Calu3 (cell line): ENCODE measurements at regions of chr16 and their contacts with region 1.

Region 1: GRCh38 chr16:15427648-15428239 is 6.6 kb upstream of the BMERB1 start:
- DNase-seq: peak; percentile 60
- H3K4me3 Mint-ChIP-seq: no peak overlapping the region
- H3K27ac Mint-ChIP-seq: no peak overlapping the region
- H3K4me1 Mint-ChIP-seq: no peaks in the 10 kb centered on the region
- H3K27me3 Mint-ChIP-seq: peaks cover under 1% of the 10 kb centered on the region
- CTCF ChIP-seq: peak; percentile 53

Region 2: GRCh38 chr16:15466886-15467781 is 39.4 kb after region 1 on chr16:
- CTCF ChIA-PET with region 1: interaction called, 11 read pairs
- intact Hi-C with region 1: loop called (anchors 2 kb)
- DNase-seq: no peak
- H3K4me3 Mint-ChIP-seq: no peak overlapping the region
- H3K27ac Mint-ChIP-seq: no peak overlapping the region
- H3K4me1 Mint-ChIP-seq: peaks cover 8% of the 10 kb centered on the region
- H3K27me3 Mint-ChIP-seq: no peaks in the 10 kb centered on the region
- CTCF ChIP-seq: peak; percentile 50

Region 3: DNA sequence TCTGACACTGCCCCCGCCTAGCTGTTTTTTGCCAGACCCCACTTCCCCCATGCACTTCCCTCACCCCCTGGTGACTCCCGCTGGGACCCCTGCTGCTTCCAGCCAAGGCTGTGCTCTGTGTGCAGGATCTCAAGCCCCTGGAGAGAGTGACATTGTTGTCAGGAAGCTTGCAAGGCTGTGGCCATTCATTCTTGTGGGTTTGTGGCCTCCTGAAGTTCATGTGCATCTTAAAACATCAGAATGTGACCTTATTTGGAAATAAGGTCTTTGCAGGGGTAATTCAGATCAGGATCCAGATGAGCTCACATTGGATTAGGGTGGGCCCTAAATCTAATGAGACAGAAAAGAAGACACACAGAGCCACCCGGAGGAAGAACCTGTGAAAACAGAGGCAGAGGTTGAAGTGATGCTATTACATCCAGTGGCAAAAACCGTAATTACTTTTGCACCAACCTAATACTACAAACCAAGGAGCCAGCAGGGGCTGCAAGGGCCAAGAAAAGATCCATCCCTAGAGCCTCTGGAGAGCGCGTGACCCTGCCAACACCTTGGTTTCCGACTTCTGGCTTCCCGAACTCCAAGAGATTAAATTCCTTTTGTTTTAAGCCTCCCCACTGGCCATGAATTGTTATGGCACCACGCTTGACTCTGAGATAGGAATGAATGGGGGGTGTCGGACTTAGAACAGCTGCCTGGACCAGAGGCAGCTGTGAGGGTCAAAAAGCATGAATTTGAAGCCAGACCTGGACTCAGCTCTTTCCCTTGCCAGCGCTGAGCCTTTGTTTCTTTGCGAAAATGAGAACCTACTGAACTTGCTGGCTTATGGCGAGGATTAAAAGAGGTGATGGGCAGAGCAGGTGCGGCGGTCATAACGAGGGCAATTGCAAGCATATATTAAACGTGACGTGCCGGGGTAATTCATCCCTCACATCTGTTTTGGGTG is 82.1 kb after region 1 on chr16:
- CTCF ChIA-PET with region 1: no interaction called
- intact Hi-C with region 1: no loop called
- DNase-seq: no peak
- H3K4me3 Mint-ChIP-seq: no peak overlapping the region
- H3K27ac Mint-ChIP-seq: no peak overlapping the region
- H3K4me1 Mint-ChIP-seq: no peaks in the 10 kb centered on the region
- H3K27me3 Mint-ChIP-seq: peaks cover 38% of the 10 kb centered on the region
- CTCF ChIP-seq: no peak

Region 4: DNA sequence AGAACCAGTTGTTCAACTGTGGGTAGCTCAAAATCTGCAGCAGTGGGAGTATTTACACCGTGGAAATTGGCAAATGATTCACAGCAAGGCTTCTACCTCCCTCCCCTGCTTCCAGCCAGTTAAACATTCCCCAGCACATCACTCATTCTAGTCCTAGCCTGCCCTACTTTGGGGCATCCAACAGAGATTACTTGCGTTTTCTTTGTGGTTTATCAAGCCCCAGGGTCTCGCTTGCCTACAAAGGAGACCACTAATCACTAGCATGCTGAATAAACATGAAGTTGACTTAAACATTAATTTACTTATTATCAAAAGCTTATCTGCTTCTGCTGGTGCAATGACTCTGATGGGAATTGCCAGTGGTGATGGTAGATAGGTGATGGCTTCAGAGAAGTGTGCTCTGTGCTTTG is 120.7 kb after region 1 on chr16:
- CTCF ChIA-PET with region 1: interaction called, 14 read pairs
- intact Hi-C with region 1: no loop called
- DNase-seq: peak; percentile 8
- H3K4me3 Mint-ChIP-seq: no peak overlapping the region
- H3K27ac Mint-ChIP-seq: no peak overlapping the region
- H3K4me1 Mint-ChIP-seq: peaks cover 33% of the 10 kb centered on the region
- H3K27me3 Mint-ChIP-seq: no peaks in the 10 kb centered on the region
- CTCF ChIP-seq: no peak

Region 5: GRCh38 chr16:15704545-15704987 is 276.8 kb after region 1 on chr16:
- CTCF ChIA-PET with region 1: no interaction called
- intact Hi-C with region 1: loop called (anchors 10 kb)
- DNase-seq: peak; percentile 83
- H3K4me3 Mint-ChIP-seq: no peak overlapping the region
- H3K27ac Mint-ChIP-seq: no peak overlapping the region
- H3K4me1 Mint-ChIP-seq: no peaks in the 10 kb centered on the region
- H3K27me3 Mint-ChIP-seq: no peaks in the 10 kb centered on the region
- CTCF ChIP-seq: peak; percentile 79